Caco-2 (cell line): ENCODE measurements at regions of chr12 and their contacts with region 1.

Region 1: GRCh38 chr12:91382081-91382543 is 199.5 kb upstream of the DCN start:
- DNase-seq: peak; percentile 71 to 80
- H3K4me3 ChIP-seq: no peak overlapping the region
- H3K4me3 Mint-ChIP-seq: peak overlapping the region; percentile 36
- H3K27ac Mint-ChIP-seq: no peak overlapping the region
- H3K4me1 ChIP-seq: no peaks in the 10 kb centered on the region
- H3K4me1 Mint-ChIP-seq: no peaks in the 10 kb centered on the region
- H3K27me3 ChIP-seq: no peaks in the 10 kb centered on the region; the same call in 1 of the 2 replicates
- H3K27me3 Mint-ChIP-seq: peaks cover 9% of the 10 kb centered on the region
- CTCF ChIP-seq: peak; percentile 84 to 88

Region 2: DNA sequence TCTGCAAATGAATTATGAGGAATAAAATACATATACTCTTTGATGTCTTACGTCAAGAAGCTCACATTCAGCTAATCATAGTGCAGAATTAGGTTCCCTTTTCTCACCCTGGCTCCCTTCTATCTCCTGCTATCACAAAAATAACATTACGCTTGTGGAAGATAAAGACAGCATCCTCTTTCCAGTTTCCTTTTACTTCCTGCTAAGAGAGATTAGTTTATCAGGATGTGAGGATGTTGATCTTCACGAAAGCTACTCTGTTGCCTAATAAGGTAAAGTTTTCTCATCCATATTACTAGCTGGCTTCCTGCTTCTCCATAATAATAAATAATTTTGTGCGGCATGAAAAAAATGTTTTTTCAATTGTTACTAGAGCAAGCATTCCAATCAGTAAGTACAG is 18.2 kb after region 1 on chr12:
- CTCF ChIA-PET with region 1: no interaction called
- POLR2A ChIA-PET with region 1: no interaction called
- intact Hi-C with region 1: no loop called
- DNase-seq: no peak
- H3K4me3 ChIP-seq: no peak overlapping the region
- H3K4me3 Mint-ChIP-seq: no peak overlapping the region
- H3K27ac Mint-ChIP-seq: no peak overlapping the region
- H3K4me1 ChIP-seq: 0 out of 2 replicates have a peak, but pooled peaks cover 4% of the 10 kb centered on the region
- H3K4me1 Mint-ChIP-seq: no peaks in the 10 kb centered on the region
- H3K27me3 ChIP-seq: no peaks in the 10 kb centered on the region
- H3K27me3 Mint-ChIP-seq: no peaks in the 10 kb centered on the region
- CTCF ChIP-seq: no peak

Region 3: DNA sequence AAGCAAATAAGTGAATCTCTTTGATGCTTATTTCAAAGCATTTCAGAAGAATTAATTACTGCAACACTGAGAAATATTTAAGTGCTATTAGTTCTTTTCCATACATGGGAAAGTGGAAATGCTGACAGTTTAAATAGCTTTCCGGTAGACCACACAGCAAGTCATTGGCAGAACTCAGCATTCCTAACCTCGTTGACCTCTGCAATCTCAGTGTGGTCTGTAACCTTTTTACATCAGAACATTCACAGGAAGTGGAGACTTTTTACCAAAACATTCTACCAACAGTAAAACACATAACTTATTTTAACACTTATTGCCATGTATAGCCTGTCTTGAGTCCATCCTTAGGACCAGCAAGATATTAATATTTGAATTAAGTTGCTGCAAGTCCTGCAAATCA is 50.0 kb after region 1 on chr12:
- CTCF ChIA-PET with region 1: no interaction called
- POLR2A ChIA-PET with region 1: no interaction called
- intact Hi-C with region 1: no loop called
- DNase-seq: no peak
- H3K4me3 ChIP-seq: no peak overlapping the region
- H3K4me3 Mint-ChIP-seq: no peak overlapping the region
- H3K27ac Mint-ChIP-seq: no peak overlapping the region
- H3K4me1 ChIP-seq: no peaks in the 10 kb centered on the region
- H3K4me1 Mint-ChIP-seq: no peaks in the 10 kb centered on the region
- H3K27me3 ChIP-seq: no peaks in the 10 kb centered on the region
- H3K27me3 Mint-ChIP-seq: no peaks in the 10 kb centered on the region
- CTCF ChIP-seq: no peak

Region 4: GRCh38 chr12:91577586-91578539 is 195.8 kb after region 1 on chr12:
- CTCF ChIA-PET with region 1: interaction called, 3 read pairs
- POLR2A ChIA-PET with region 1: no interaction called
- intact Hi-C with region 1: loop called (anchors 10 kb)
- DNase-seq: no peak
- H3K4me3 ChIP-seq: no peak overlapping the region
- H3K4me3 Mint-ChIP-seq: no peak overlapping the region
- H3K27ac Mint-ChIP-seq: no peak overlapping the region
- H3K4me1 ChIP-seq: no peaks in the 10 kb centered on the region
- H3K4me1 Mint-ChIP-seq: no peaks in the 10 kb centered on the region
- H3K27me3 ChIP-seq: no peaks in the 10 kb centered on the region
- H3K27me3 Mint-ChIP-seq: no peaks in the 10 kb centered on the region
- CTCF ChIP-seq: peak; percentile 39 to 75

Region 5: DNA sequence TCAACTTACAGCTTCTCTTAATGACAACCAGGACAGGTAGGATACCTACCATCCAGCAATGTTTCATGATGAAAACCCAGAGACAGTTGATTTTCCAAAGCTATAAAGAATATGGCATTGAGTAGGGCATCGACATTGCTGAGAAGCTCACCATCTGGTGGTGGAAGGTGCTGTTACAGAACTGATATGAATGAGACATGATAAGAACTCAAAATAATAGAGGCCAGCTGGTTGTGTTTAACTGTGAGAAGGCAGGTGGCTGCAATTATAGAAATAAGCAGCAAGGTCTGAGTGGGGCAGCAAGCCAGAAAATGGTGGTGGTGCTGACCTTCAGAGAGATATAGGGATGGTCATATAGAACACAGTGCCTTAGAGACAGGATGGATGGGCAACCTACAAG is 313.8 kb after region 1 on chr12:
- CTCF ChIA-PET with region 1: no interaction called
- POLR2A ChIA-PET with region 1: no interaction called
- intact Hi-C with region 1: loop called (anchors 1 kb)
- DNase-seq: no peak
- H3K4me3 ChIP-seq: no peak overlapping the region
- H3K4me3 Mint-ChIP-seq: no peak overlapping the region
- H3K27ac Mint-ChIP-seq: no peak overlapping the region
- H3K4me1 ChIP-seq: no peaks in the 10 kb centered on the region
- H3K4me1 Mint-ChIP-seq: no peaks in the 10 kb centered on the region
- H3K27me3 ChIP-seq: no peaks in the 10 kb centered on the region
- H3K27me3 Mint-ChIP-seq: no peaks in the 10 kb centered on the region
- CTCF ChIP-seq: no peak

Region 6: GRCh38 chr12:91811481-91812287 is 429.6 kb after region 1 on chr12:
- CTCF ChIA-PET with region 1: interaction called, 3 read pairs
- POLR2A ChIA-PET with region 1: no interaction called
- intact Hi-C with region 1: loop called (anchors 1 kb)
- DNase-seq: peak; percentile 43 to 70
- H3K4me3 ChIP-seq: no peak overlapping the region
- H3K4me3 Mint-ChIP-seq: no peak overlapping the region
- H3K27ac Mint-ChIP-seq: no peak overlapping the region
- H3K4me1 ChIP-seq: no peaks in the 10 kb centered on the region
- H3K4me1 Mint-ChIP-seq: no peaks in the 10 kb centered on the region
- H3K27me3 ChIP-seq: no peaks in the 10 kb centered on the region
- H3K27me3 Mint-ChIP-seq: no peaks in the 10 kb centered on the region
- CTCF ChIP-seq: peak; percentile 80 to 83

Region 7: DNA sequence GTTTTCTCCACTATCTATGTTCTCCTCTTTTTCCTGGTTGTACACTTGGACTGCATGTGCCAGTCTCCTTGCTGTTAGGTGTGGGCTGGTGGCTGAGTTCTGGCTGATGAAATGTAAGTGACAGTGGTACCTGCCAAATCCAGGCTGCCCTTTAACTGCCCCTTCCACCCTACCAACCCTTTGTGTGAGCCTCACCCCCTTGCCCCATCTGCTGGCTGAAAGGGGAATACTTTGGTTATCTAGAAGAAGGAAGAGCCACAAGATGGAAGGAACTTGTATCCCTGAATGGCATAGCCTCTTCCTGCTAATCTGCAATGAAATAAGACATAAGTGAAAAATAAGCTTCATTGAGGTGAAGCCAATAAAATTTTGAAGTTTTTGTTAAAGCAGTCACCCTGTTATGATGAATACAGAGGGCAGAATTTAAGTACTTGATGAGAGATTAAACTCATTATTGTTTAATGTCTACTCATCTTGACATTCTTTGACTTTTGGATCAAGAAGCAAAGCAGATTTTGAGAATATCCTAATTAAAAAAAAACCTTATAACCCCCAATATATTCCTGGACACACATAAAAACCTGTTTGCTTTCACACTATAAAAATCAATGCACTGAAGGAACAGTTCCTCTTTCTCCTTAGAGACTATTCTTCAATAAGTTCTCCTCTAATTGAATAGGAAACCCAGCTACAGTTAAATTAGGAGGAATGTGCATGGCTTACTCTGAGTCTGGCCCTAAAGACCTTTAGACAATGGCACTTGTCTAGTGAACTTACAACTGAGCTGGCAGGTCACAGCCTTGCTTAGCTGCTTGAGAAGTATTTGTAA is 1026.2 kb after region 1 on chr12:
- CTCF ChIA-PET with region 1: interaction called, 4 read pairs
- POLR2A ChIA-PET with region 1: no interaction called
- intact Hi-C with region 1: loop called (anchors 1 kb)
- DNase-seq: peak; percentile 52 to 59
- H3K4me3 ChIP-seq: no peak overlapping the region
- H3K4me3 Mint-ChIP-seq: no peak overlapping the region
- H3K27ac Mint-ChIP-seq: no peak overlapping the region
- H3K4me1 ChIP-seq: no peaks in the 10 kb centered on the region
- H3K4me1 Mint-ChIP-seq: no peaks in the 10 kb centered on the region
- H3K27me3 ChIP-seq: no peaks in the 10 kb centered on the region
- H3K27me3 Mint-ChIP-seq: no peaks in the 10 kb centered on the region
- CTCF ChIP-seq: peak; percentile 61 to 64

Region 8: DNA sequence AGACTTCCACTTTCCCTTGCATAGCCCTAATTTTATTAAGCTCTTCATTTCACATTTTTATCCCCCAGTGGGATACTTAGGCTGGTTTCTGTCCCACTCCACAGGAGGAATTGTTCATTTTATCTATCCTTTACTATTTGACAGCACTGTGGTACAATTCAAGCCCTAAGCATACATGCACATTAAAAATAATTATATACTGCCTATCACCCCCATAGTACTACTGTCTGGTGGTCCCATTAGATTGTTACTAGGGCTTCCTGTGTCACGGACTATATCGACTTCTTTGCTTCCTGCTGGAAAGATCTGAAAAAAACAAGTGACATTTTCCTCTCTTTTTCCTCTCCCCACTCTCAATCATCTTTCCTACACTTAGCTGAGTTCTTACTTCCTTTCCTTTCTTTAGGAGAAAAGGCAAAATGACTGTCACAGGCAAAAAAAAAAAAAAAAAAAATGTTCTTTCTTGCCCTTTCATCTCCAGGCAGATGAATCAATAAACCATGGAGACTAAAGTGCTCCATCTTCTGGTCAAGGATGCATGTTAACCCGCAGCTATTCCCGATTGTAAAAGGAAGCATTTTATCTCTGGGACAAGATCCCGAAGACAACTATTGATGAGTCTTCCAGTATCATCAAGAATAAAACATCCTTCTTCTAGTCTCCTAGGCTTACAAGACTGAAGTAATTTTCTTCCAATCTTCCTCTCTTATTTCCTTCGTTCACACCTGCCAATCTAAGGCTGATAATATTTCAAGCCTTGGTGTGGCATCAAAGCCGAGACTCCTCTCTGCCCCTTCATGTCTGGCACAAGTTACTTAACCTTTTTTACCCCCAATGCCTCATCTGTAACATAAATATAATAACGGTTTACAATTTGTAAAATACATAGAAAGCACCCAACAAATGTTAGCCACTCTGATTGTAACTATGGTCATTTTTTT is 1226.3 kb after region 1 on chr12:
- CTCF ChIA-PET with region 1: interaction called, 3 read pairs
- POLR2A ChIA-PET with region 1: no interaction called
- intact Hi-C with region 1: loop called (anchors 2 kb)
- DNase-seq: peak; percentile 34 to 46
- H3K4me3 ChIP-seq: no peak overlapping the region
- H3K4me3 Mint-ChIP-seq: no peak overlapping the region
- H3K27ac Mint-ChIP-seq: no peak overlapping the region
- H3K4me1 ChIP-seq: peaks cover 2% of the 10 kb centered on the region
- H3K4me1 Mint-ChIP-seq: no peaks in the 10 kb centered on the region
- H3K27me3 ChIP-seq: no peaks in the 10 kb centered on the region
- H3K27me3 Mint-ChIP-seq: no peaks in the 10 kb centered on the region
- CTCF ChIP-seq: peak; percentile 39 to 70

Region 9: GRCh38 chr12:92649511-92650227 is 1267.6 kb after region 1 on chr12:
- CTCF ChIA-PET with region 1: no interaction called
- POLR2A ChIA-PET with region 1: no interaction called
- intact Hi-C with region 1: loop called (anchors 1 kb)
- DNase-seq: peak; percentile 67
- H3K4me3 ChIP-seq: no peak overlapping the region
- H3K4me3 Mint-ChIP-seq: no peak overlapping the region
- H3K27ac Mint-ChIP-seq: no peak overlapping the region
- H3K4me1 ChIP-seq: no peaks in the 10 kb centered on the region
- H3K4me1 Mint-ChIP-seq: no peaks in the 10 kb centered on the region
- H3K27me3 ChIP-seq: no peaks in the 10 kb centered on the region
- H3K27me3 Mint-ChIP-seq: peaks cover 27% of the 10 kb centered on the region
- CTCF ChIP-seq: peak; percentile 54 to 76